Endothelial cell of umbilical vein (primary cell): ENCODE measurements at regions of chr10 and their contacts with region 1.

Region 1: DNA sequence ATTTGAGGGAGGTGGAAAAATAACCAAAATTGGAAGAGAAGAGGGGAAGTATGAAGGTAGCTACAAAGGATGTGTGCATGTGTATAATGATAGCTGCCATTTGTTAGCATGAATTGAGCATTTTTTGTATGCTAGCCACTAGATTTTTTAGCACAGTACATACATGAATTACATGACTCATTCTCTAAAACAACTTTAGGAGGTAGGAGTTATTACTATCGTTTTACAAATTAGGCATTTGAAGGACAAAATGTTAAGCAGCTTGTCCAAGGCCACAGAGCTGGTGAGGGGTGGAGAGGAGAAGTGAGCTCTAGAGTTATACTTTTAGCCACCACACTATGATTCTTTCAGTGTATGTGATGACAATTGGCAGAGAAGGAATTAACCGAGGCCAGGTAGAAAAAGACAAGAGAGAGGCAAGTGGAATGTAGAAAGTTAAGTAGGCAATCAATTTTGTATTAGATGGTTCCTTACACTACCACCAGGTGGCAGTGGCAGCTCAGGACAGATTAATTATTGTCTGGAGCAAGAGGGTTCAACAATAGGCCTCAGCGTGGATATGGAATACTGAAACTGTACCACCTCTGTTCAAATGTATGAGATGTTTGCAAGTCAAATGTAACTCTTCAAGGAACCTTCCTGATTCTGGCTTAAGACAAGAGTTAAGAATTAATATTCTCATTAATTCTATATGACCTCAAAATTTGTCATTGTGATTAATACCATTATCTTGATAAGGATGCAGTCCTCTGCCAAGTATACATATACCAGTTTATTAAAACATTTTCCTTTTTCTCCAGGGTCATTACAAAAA is 128.0 kb downstream of the MBL2 start:
- DNase-seq: peak; percentile 79
- H3K4me3 ChIP-seq: no peak overlapping the region
- H3K27ac ChIP-seq: no peak overlapping the region
- H3K4me1 ChIP-seq: no peaks in the 10 kb centered on the region
- H3K27me3 ChIP-seq: no peaks in the 10 kb centered on the region
- CTCF ChIP-seq: peak; percentile 56 to 61
- POLR2A ChIP-seq: no peak

Region 2: GRCh38 chr10:52578871-52579405 is 65.6 kb before region 1 on chr10:
- CTCF ChIA-PET with region 1: no interaction called
- POLR2A ChIA-PET with region 1: no interaction called
- dilution Hi-C with region 1: no loop called
- intact Hi-C with region 1: loop called (anchors 1 kb)
- DNase-seq: peak; percentile 96
- H3K4me3 ChIP-seq: peak overlapping the region in 1 of 3 experiments; percentile 40
- H3K27ac ChIP-seq: peak overlapping the region; percentile 91
- H3K4me1 ChIP-seq: peaks cover 41% of the 10 kb centered on the region
- H3K27me3 ChIP-seq: no peaks in the 10 kb centered on the region
- CTCF ChIP-seq: no peak
- POLR2A ChIP-seq: no peak

Region 3: DNA sequence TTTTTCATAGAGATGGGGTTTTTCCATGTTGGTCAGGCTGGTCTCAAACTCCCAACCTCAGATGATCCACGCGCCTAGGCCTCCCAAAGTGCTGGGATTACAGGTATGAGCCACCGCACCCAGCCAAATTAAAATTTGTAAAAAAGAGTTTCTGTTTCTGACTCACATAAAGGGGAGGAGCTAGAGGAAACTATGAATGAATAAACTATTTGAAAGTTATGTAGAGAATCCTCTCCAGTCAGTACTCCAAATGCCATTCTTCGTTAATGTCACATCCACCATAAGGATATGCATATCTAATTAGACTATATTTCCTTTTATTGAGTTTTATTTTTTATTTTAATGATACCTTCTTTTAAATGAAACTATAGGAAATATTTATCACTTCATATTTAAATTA is 75.4 kb after region 1 on chr10:
- CTCF ChIA-PET with region 1: interaction called, 19 read pairs
- POLR2A ChIA-PET with region 1: no interaction called
- dilution Hi-C with region 1: no loop called
- intact Hi-C with region 1: no loop called
- DNase-seq: no peak
- H3K4me3 ChIP-seq: no peak overlapping the region
- H3K27ac ChIP-seq: no peak overlapping the region
- H3K4me1 ChIP-seq: no peaks in the 10 kb centered on the region
- H3K27me3 ChIP-seq: no peaks in the 10 kb centered on the region
- CTCF ChIP-seq: no peak
- POLR2A ChIP-seq: no peak

Region 4: DNA sequence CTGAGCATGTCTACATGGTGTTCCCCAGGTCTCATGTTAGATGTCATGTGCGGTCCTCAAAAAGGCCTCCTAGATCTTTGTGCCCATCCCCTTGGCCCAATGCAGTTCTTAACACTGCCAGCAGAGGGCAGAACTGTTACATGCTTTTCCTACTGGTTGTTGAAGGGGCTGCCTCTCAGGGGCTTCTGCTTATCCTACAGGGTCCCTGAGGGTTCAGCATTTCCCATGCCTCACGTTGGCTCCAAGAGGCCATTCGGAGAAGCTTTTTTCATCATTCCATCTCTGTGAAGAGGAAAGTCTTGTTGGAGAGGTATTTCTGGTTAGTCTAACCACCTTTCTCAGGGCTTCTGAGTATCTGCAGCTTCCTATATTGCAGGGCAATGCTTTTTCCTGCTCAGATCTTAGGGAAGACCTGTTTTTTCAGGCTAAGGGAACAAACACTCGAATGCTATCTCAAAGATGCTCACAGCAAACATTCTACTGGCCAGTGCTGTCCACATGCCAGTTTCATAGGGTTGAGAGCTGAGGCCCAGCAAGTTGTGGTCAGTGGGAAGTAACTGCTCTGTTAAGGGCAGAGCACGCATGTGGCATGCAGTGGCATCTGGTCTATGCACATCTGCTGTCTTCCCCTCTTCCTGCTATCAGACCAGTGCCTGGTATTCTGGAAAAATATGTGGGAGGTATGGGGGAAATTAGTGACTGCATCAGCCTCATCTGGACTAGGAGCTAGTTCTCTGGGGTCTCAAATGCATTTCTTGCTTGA is 96.5 kb after region 1 on chr10:
- CTCF ChIA-PET with region 1: interaction called, 18 read pairs
- POLR2A ChIA-PET with region 1: no interaction called
- dilution Hi-C with region 1: no loop called
- intact Hi-C with region 1: loop called (anchors 1 kb)
- DNase-seq: peak; percentile 52
- H3K4me3 ChIP-seq: no peak overlapping the region
- H3K27ac ChIP-seq: no peak overlapping the region
- H3K4me1 ChIP-seq: no peaks in the 10 kb centered on the region
- H3K27me3 ChIP-seq: no peaks in the 10 kb centered on the region
- CTCF ChIP-seq: peak; percentile 85 to 90
- POLR2A ChIP-seq: no peak

Region 5: DNA sequence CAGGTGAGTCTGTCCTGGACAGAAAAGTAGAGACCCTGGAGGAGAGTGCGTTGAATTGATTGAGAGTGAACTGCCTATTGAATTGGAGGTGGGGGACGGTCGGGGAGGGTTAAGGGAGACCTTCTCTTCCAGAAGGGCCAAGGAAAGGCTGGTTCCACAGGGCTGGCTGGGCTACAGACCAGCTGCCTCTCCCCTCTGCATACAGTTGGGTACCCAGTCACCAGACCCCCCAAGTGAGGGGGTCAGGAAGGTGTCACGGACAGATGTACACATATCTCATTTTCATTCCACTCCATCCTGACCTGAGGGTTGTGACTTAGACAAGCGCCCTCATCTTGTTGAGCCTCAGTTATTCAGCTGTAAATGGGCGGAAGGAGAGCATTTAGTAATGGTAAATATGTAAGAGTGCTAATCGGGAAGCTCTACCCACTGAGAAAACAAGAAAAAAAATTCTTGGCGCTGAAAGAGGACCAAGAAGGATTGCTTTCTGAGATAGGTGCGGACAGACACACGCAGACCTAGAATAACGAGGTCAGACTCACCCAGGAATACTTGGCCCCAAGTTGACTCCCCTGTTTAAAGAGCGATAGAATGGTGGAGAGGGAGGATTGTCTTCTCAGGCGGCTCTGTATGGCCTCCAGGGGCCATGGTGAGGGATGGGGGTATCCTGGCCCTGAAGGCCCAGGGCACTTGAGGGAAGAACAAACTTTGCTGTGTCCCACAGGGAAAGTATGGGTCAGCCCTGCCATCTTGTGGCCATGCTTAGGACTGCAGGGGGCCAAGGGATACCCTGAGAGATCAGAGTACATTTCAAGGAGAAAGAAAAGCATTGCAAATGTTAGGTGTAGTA is 135.2 kb after region 1 on chr10:
- CTCF ChIA-PET with region 1: interaction called, 117 read pairs
- POLR2A ChIA-PET with region 1: no interaction called
- dilution Hi-C with region 1: no loop called
- intact Hi-C with region 1: loop called (anchors 1 kb)
- DNase-seq: peak; percentile 70
- H3K4me3 ChIP-seq: no peak overlapping the region
- H3K27ac ChIP-seq: no peak overlapping the region
- H3K4me1 ChIP-seq: no peaks in the 10 kb centered on the region
- H3K27me3 ChIP-seq: peaks cover 5 to 10% of the 10 kb centered on the region in 2 experiments
- CTCF ChIP-seq: peak; percentile 88 to 94
- POLR2A ChIP-seq: no peak

Region 6: DNA sequence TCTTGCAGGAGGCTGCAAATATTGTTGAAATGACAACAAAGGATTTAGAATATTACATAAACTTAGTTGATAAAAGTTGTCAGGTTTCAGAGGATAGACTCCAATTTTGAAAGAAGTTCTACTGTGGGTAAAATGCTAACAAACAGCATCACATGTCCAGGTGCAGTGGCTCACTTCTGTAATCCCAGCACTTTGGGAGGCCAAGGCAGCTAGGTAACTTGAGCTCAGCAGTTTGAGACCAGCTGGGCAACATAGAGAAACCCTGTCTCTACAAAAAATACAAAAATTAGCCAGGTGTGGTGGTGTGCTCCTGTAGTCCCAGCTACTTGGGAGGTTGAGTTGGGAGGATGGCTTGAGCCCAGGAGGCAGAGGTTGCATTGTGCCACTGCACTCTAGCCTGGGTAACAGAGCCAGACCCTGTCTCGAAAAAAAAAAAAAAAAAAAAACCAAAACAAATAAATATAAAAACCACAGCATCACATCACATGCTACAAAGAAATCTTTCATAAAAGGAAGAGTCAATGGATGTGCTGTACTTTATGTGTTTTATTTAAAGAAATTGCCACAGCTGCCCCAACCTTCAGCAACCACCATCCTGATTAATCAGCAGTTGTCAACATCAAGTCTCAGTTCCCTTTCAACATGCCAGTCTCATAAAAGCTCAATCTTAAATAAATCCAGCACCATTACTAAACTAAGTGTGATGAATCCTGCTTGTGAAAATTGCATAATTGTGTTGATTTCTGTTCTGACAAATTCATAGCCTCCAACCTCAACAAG is 211.2 kb after region 1 on chr10:
- CTCF ChIA-PET with region 1: no interaction called
- POLR2A ChIA-PET with region 1: no interaction called
- dilution Hi-C with region 1: no loop called
- intact Hi-C with region 1: no loop called
- DNase-seq: no peak
- H3K4me3 ChIP-seq: no peak overlapping the region
- H3K27ac ChIP-seq: no peak overlapping the region
- H3K4me1 ChIP-seq: no peaks in the 10 kb centered on the region
- H3K27me3 ChIP-seq: peaks cover 0 to 2% of the 10 kb centered on the region in 2 experiments
- CTCF ChIP-seq: no peak
- POLR2A ChIP-seq: no peak